Activated CD4-positive, alpha-beta memory T cell treated with anti-CD3 and anti-CD28 coated beads for 36 hours (primary cell): ENCODE measurements at regions of chr7 and their contacts with region 1.

Region 1: GRCh38 chr7:133230591-133231194 is 22.2 kb upstream of the EXOC4 start:
- DNase-seq: peak; percentile 50
- H3K4me3 Mint-ChIP-seq: no peak overlapping the region
- H3K27ac Mint-ChIP-seq: no peak overlapping the region
- H3K4me1 Mint-ChIP-seq: no peaks in the 10 kb centered on the region
- H3K27me3 Mint-ChIP-seq: peaks cover 7% of the 10 kb centered on the region

Region 2: GRCh38 chr7:132318352-132319318 is 912.1 kb before region 1 on chr7:
- CTCF ChIA-PET with region 1: interaction called, 3 read pairs
- POLR2A ChIA-PET with region 1: no interaction called
- intact Hi-C with region 1: loop called (anchors 2 kb)
- DNase-seq: peak; percentile 84
- H3K4me3 Mint-ChIP-seq: no peak overlapping the region
- H3K27ac Mint-ChIP-seq: no peak overlapping the region
- H3K4me1 Mint-ChIP-seq: peaks cover 10% of the 10 kb centered on the region
- H3K27me3 Mint-ChIP-seq: peaks cover 16% of the 10 kb centered on the region

Region 3: DNA sequence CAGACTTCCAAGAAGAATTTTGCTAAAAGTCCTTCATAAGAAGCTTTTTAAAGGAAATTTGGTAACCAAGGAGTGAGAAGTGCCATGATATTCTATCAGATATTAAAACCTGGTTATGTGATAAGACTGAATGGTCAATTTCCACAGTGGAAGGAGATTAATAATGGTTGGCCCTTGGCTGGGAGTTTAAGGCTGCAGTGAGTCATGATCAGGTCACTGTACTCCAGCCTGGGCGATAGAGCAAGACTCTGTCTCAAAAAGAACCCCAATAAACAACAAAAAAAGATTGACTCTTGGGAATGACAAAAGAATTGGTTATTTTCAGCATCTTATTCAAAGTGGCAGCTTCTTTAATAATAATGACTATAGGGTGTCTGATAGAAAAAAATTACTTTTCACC is 59.3 kb after region 1 on chr7:
- CTCF ChIA-PET with region 1: no interaction called
- POLR2A ChIA-PET with region 1: no interaction called
- intact Hi-C with region 1: loop called (anchors 10 kb)
- DNase-seq: no peak
- H3K4me3 Mint-ChIP-seq: no peak overlapping the region
- H3K27ac Mint-ChIP-seq: no peak overlapping the region
- H3K4me1 Mint-ChIP-seq: peaks cover 12% of the 10 kb centered on the region
- H3K27me3 Mint-ChIP-seq: no peaks in the 10 kb centered on the region